Calu3 (cell line): ENCODE measurements at regions of chr11 and their contacts with region 1.

Region 1: GRCh38 chr11:126303623-126304456 is at the start of gene DCPS:
- DNase-seq: peak; percentile 90
- H3K4me3 Mint-ChIP-seq: peak within 1 kb of the TSS; percentile 86
- H3K27ac Mint-ChIP-seq: peak within 1 kb of the TSS; percentile 50
- H3K4me1 Mint-ChIP-seq: peaks cover 8% of the 10 kb centered on the region
- H3K27me3 Mint-ChIP-seq: no peaks in the 10 kb centered on the region
- CTCF ChIP-seq: no peak
- total RNA-seq, gene DCPS: 30.5 and 33.2 TPM in 2 replicates

Region 2: DNA sequence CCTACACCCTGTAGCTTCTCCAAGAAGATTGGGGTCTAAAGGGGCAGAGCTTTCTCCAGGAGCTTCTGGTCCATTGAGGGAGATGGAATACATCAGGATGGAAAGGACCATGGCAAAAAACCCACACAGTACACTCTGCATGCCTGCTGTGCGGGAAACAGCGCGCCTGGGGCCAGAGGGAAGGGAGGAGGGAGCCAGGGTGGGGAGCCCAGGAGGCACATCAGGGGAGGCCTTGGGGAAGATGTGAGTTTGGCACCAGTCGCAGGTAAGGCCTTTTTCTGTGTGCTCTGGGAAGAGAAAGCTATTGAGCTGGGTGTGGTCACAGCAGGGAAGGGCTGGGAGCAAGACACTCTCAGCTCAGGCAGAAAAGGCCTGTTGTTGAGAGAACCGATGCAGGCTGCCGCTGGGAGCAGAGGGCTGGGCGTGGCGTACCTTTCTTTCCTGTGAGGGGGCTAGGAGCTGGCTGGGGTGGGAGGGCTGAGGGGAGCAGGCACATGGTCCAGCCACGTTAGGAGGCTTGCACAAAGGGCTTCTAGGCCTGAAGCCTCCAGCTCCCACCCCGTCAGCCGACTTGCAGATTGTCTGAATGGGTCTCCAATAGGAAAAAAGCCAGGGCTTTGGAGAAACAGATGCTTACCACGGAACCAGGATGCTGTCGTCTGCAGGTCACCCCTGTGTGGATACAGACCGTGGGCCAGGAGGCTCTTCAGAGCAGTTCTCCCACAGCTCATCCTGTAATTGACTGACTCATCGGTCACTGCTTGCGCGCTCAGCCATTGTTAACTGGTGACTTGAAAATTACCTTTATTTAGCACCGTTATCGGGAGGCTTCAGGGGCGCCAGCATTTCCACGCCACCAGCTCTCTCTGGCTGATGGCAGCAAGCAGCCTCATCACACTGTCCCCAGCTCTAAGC is 288.9 kb after region 1 on chr11:
- CTCF ChIA-PET with region 1: no interaction called
- intact Hi-C with region 1: no loop called
- DNase-seq: peak; percentile 8
- H3K4me3 Mint-ChIP-seq: no peak overlapping the region
- H3K27ac Mint-ChIP-seq: no peak overlapping the region
- H3K4me1 Mint-ChIP-seq: no peaks in the 10 kb centered on the region
- H3K27me3 Mint-ChIP-seq: peaks cover 11% of the 10 kb centered on the region
- CTCF ChIP-seq: no peak

Region 3: GRCh38 chr11:126607374-126607773 is 303.5 kb after region 1 on chr11:
- CTCF ChIA-PET with region 1: no interaction called
- intact Hi-C with region 1: loop called (anchors 10 kb)
- DNase-seq: peak; percentile 67
- H3K4me3 Mint-ChIP-seq: no peak overlapping the region
- H3K27ac Mint-ChIP-seq: no peak overlapping the region
- H3K4me1 Mint-ChIP-seq: no peaks in the 10 kb centered on the region
- H3K27me3 Mint-ChIP-seq: peaks cover 63% of the 10 kb centered on the region
- CTCF ChIP-seq: peak; percentile 59